Right cardiac atrium (tissue), 5 donors: ENCODE measurements at regions of chr9 and their contacts with region 1.

Region 1: GRCh38 chr9:19431361-19432171 is 22.8 kb downstream of the ACER2 start:
- DNase-seq: peak; percentile 84 to 92 (median 92)
- ATAC-seq: peak; percentile 94 to 97
- H3K4me3 ChIP-seq: no peak overlapping the region
- H3K27ac ChIP-seq: peak overlapping the region; percentile 93
- H3K4me1 ChIP-seq: peaks cover 4% of the 10 kb centered on the region
- H3K27me3 ChIP-seq: no peaks in the 10 kb centered on the region

Region 2: DNA sequence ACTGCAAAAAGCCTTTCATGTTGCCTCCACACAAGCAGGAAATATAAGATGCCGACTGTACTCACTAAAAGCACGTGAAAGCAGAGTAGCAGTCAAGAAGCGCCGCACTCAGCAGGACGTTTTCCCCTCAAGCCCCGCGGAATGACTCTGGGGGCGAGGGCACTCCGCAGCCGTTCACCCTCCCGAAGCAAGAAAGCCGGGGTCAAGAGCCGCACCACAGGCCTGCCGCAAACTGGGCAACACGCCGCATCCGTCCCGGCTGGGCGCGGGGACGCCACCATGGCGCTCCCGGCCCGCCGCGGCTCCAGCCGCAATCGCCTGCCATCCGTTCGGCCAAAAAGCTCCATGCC is 51.9 kb before region 1 on chr9:
- intact Hi-C with region 1: loop called in 1 of 4 experiments (anchors 10 kb)
- DNase-seq: peak in 2 of 3 donors; percentile 53 to 75
- ATAC-seq: peak; percentile 59 to 68
- H3K4me3 ChIP-seq: peak overlapping the region; percentile 76
- H3K27ac ChIP-seq: peak overlapping the region; percentile 78
- H3K4me1 ChIP-seq: no peaks in the 10 kb centered on the region
- H3K27me3 ChIP-seq: no peaks in the 10 kb centered on the region